CD14-positive monocyte (primary cell): ENCODE measurements at regions of chr3 and their contacts with region 1.

Region 1: GRCh38 chr3:159902546-159903314 is 85.9 kb upstream of the IL12A start:
- DNase-seq: peak; percentile 43 to 70 (median 60)
- H3K4me3 ChIP-seq: no peak overlapping the region
- H3K4me3 Mint-ChIP-seq: peak overlapping the region in 1 of 2 donors; percentile 48
- H3K27ac ChIP-seq: peak overlapping the region in 1 of 2 donors; percentile 33
- H3K27ac Mint-ChIP-seq: peak overlapping the region in 5 of 7 donors; percentile 12 to 72 (median 68)
- H3K4me1 ChIP-seq: peaks cover 40 to 49% of the 10 kb centered on the region in 2 donors
- H3K4me1 Mint-ChIP-seq: peaks cover 45% of the 10 kb centered on the region
- H3K27me3 ChIP-seq: no peaks in the 10 kb centered on the region
- H3K27me3 Mint-ChIP-seq: peaks cover 0 to 3% (median 1%) of the 10 kb centered on the region in 3 donors
- CTCF ChIP-seq: no peak

Region 2: GRCh38 chr3:159914426-159914825 is 11.7 kb after region 1 on chr3:
- intact Hi-C with region 1: no loop called
- DNase-seq: no peak
- H3K4me3 ChIP-seq: no peak overlapping the region
- H3K4me3 Mint-ChIP-seq: no peak overlapping the region
- H3K27ac ChIP-seq: no peak overlapping the region
- H3K27ac Mint-ChIP-seq: no peak overlapping the region
- H3K4me1 ChIP-seq: peaks cover 13 to 24% of the 10 kb centered on the region in 2 donors
- H3K4me1 Mint-ChIP-seq: peaks cover 26% of the 10 kb centered on the region
- H3K27me3 ChIP-seq: no peaks in the 10 kb centered on the region
- H3K27me3 Mint-ChIP-seq: peaks cover 0 to 3% (median 0%) of the 10 kb centered on the region in 3 donors
- CTCF ChIP-seq: no peak

Region 3: GRCh38 chr3:159950156-159950898 is 47.6 kb after region 1 on chr3:
- intact Hi-C with region 1: loop called in 1 of 2 experiments (anchors 10 kb)
- DNase-seq: peak in 2 of 3 donors; percentile 34 to 37
- H3K4me3 ChIP-seq: peak overlapping the region in 1 of 3 experiments; percentile 3
- H3K4me3 Mint-ChIP-seq: peak overlapping the region; percentile 16 to 49
- H3K27ac ChIP-seq: no peak overlapping the region
- H3K27ac Mint-ChIP-seq: peak overlapping the region in 1 of 7 donors; percentile 45
- H3K4me1 ChIP-seq: peaks cover 82 to 86% of the 10 kb centered on the region in 2 donors
- H3K4me1 Mint-ChIP-seq: peaks cover 79% of the 10 kb centered on the region
- H3K27me3 ChIP-seq: no peaks in the 10 kb centered on the region
- H3K27me3 Mint-ChIP-seq: peaks cover 0 to 2% (median 0%) of the 10 kb centered on the region in 3 donors
- CTCF ChIP-seq: no peak